Left cardiac atrium (tissue), 4 donors: ENCODE measurements at regions of chr4 and their contacts with region 1.

Region 1: DNA sequence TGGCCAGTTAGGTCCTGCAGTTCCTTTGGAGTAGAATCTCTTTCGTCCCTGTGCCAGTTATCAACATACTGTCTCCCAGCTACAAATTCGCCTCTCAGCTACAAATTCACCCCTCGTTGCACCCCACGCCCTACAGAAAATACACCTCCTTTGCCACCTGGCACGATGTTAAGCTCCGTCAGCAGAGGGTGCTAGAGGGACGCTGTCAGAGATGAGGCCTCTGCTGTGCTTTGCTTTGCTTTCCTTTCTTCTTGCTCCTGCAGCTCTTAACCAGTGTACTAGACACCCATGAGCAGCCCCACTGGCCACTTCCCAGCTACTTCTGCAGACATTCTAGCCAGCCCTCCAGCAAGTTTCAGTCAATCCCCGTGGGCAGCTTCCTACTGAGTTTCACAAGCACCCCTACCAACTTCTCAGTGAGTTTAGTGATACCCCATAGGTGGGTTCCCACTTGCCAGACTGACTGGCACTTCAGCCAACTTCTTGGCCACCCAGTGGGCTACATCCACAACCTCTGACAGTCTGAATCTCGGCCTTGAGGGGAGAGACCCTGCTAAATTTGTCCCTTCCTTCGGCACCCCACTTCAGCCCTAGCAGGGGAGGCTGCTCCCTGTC is 21.8 kb downstream of the HAUS3 start:
- DNase-seq: peak; percentile 69
- ATAC-seq: peak; percentile 88 to 95

Region 2: GRCh38 chr4:2428496-2429213 is 208.5 kb after region 1 on chr4:
- intact Hi-C with region 1: loop called in 1 of 2 experiments (anchors 5 kb)
- DNase-seq: peak; percentile 12
- ATAC-seq: no peak

Region 3: GRCh38 chr4:2441393-2442174 is 221.5 kb after region 1 on chr4:
- intact Hi-C with region 1: loop called in 1 of 2 experiments (anchors 2 kb)
- DNase-seq: peak; percentile 52
- ATAC-seq: peak; percentile 56 to 73

Region 4: GRCh38 chr4:2462218-2462991 is 242.3 kb after region 1 on chr4:
- intact Hi-C with region 1: loop called in 1 of 2 experiments (anchors 5 kb)
- DNase-seq: peak; percentile 75
- ATAC-seq: peak; percentile 96 to 98